ENCODE measurements at regions of chr5 and their contacts with region 1.

Region 1: GRCh38 chr5:143008809-143009521 is 238.8 kb downstream of the ARHGAP26 start:
- DNase-seq: peak; percentile 95
- H3K4me3 Mint-ChIP-seq: no peak overlapping the region
- H3K27ac Mint-ChIP-seq: peak overlapping the region; percentile 85
- H3K4me1 Mint-ChIP-seq: peaks cover 56% of the 10 kb centered on the region
- H3K27me3 Mint-ChIP-seq: no peaks in the 10 kb centered on the region

Region 2: GRCh38 chr5:142800776-142801494 is 208.0 kb before region 1 on chr5:
- CTCF ChIA-PET with region 1: no interaction called
- intact Hi-C with region 1: loop called (anchors 1 kb)
- DNase-seq: peak; percentile 77
- H3K4me3 Mint-ChIP-seq: peak overlapping the region; percentile 64
- H3K27ac Mint-ChIP-seq: peak overlapping the region; percentile 90
- H3K4me1 Mint-ChIP-seq: peaks cover 61% of the 10 kb centered on the region
- H3K27me3 Mint-ChIP-seq: no peaks in the 10 kb centered on the region

Region 3: DNA sequence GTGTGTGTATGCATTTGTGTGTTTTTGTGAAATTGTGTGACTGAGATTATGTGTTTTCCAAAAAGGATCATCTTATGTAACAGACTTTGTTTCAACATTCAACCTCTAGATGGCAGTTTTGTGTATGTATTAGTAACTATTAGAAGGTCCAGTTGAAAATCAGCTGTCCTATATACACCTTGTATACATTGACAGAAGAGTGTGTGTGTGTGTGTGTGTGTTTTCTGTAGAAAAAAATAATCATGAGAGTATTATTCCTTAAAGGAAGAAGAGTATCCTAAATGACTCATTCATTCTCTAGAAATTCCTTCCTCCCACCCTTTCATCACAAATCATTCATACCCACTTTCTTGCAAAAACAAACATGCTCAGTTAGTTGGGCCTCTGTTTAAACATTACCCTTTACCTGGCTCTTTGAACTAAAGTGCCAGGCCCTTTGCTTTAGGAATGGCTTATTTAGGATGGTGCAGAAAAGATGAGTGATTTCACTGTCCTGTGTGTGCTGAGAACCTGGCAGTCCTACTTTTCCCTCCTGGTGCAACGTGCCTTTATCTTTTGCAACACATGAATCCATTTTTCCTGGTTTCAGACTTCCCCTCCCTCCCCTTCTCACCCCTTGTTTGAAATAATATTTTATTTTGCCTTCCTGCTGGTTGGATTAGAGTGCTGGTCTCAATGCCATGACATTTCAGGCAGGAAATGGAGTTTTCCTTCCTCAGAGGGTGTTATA is 86.6 kb before region 1 on chr5:
- CTCF ChIA-PET with region 1: interaction called, 6 read pairs
- intact Hi-C with region 1: loop called (anchors 1 kb)
- DNase-seq: no peak
- H3K4me3 Mint-ChIP-seq: no peak overlapping the region
- H3K27ac Mint-ChIP-seq: no peak overlapping the region
- H3K4me1 Mint-ChIP-seq: peaks cover 13% of the 10 kb centered on the region
- H3K27me3 Mint-ChIP-seq: no peaks in the 10 kb centered on the region

Region 4: DNA sequence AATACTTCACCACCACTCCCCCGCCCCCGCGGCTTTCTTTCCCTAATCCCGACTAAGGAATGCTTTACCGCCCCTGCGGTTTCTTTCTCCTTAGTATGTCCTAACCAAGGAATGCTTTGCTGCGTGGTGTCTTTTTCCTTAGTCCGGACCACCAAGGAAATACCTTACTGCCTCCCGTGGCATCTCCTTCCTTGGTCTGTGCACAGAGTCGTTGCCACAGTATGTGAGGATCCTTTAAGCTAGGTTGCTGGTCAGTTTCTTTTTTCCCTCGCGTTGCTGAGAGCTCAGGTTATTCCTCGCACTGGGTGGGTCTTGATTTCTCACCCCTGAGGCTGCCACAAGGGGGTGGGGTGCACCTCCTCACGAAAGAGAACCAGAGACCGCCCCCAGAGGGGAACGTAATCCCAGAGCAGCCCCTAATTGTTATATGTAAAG is 85.1 kb after region 1 on chr5:
- CTCF ChIA-PET with region 1: no interaction called
- intact Hi-C with region 1: no loop called
- DNase-seq: no peak
- H3K4me3 Mint-ChIP-seq: no peak overlapping the region
- H3K27ac Mint-ChIP-seq: no peak overlapping the region
- H3K4me1 Mint-ChIP-seq: peaks cover 16% of the 10 kb centered on the region
- H3K27me3 Mint-ChIP-seq: no peaks in the 10 kb centered on the region

Region 5: GRCh38 chr5:143229896-143230675 is 221.1 kb after region 1 on chr5:
- CTCF ChIA-PET with region 1: no interaction called
- intact Hi-C with region 1: loop called (anchors 1 kb)
- DNase-seq: peak; percentile 74
- H3K4me3 Mint-ChIP-seq: peak overlapping the region; percentile 46
- H3K27ac Mint-ChIP-seq: peak overlapping the region; percentile 69
- H3K4me1 Mint-ChIP-seq: peaks cover 24% of the 10 kb centered on the region
- H3K27me3 Mint-ChIP-seq: no peaks in the 10 kb centered on the region

Region 6: GRCh38 chr5:143435210-143435657 is 426.3 kb after region 1 on chr5:
- CTCF ChIA-PET with region 1: no interaction called
- intact Hi-C with region 1: loop called (anchors 1 kb)
- DNase-seq: peak; percentile 61
- H3K4me3 Mint-ChIP-seq: peak overlapping the region; percentile 83
- H3K27ac Mint-ChIP-seq: peak overlapping the region; percentile 97
- H3K4me1 Mint-ChIP-seq: peaks cover 68% of the 10 kb centered on the region
- H3K27me3 Mint-ChIP-seq: no peaks in the 10 kb centered on the region